Panc1 (cell line): ENCODE measurements at regions of chr18 and their contacts with region 1.

Region 1: GRCh38 chr18:3217948-3218647 is 1.7 kb downstream of the MYOM1 start:
- DNase-seq: no peak
- ATAC-seq: no peak
- H3K4me3 ChIP-seq: no peak overlapping the region
- H3K27ac ChIP-seq: no peak overlapping the region
- H3K4me1 ChIP-seq: peaks cover 10% of the 10 kb centered on the region
- H3K27me3 ChIP-seq: no peaks in the 10 kb centered on the region
- CTCF ChIP-seq: no peak

Region 2: DNA sequence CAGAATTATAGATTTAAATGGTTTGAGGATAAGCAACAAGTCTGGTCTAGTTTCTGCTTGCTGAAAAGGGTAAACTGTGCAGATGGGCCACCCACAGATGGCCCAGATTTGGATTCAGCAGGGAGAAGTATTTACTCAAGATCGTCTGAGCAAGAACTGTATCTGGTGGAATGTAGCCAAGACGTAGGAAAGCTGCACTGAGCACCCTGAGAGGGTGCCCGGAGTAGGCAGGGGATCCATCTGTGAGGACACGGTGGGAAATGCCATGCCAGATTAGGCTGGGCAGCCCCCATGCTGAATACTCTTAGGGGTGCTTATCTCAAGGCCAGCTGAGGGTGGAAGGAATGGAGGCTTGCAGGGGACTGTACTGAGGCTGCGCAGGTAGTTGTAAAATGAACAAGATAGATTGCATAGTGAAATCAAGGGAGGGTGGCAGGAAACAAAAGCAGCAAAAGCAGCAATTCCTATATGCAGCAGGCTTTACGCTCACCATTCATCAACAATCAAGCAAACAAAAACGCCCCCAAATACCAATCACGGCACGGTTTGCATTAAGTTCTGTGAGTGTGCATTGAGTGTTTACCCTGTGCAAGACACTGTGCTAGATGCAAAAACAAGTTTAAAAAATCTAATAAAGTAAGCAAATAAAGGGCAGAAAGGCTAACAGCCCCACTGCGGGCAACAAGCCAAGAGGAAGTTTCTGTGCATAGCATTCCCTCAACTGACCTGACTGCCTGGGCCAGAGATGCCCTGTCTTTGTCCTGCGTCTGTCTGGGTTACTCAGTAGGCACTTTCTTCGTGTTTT is 173.0 kb before region 1 on chr18:
- CTCF ChIA-PET with region 1: no interaction called
- POLR2A ChIA-PET with region 1: no interaction called
- in situ Hi-C with region 1: no loop called
- intact Hi-C with region 1: loop called (anchors 10 kb)
- DNase-seq: no peak
- ATAC-seq: peak; percentile 48; the same call in 1 of the 2 replicates
- H3K4me3 ChIP-seq: no peak overlapping the region
- H3K27ac ChIP-seq: peak overlapping the region; percentile 4; the same call in 1 of the 2 replicates
- H3K4me1 ChIP-seq: no peaks in the 10 kb centered on the region; the same call in 1 of the 2 replicates
- H3K27me3 ChIP-seq: no peaks in the 10 kb centered on the region
- CTCF ChIP-seq: no peak

Region 3: DNA sequence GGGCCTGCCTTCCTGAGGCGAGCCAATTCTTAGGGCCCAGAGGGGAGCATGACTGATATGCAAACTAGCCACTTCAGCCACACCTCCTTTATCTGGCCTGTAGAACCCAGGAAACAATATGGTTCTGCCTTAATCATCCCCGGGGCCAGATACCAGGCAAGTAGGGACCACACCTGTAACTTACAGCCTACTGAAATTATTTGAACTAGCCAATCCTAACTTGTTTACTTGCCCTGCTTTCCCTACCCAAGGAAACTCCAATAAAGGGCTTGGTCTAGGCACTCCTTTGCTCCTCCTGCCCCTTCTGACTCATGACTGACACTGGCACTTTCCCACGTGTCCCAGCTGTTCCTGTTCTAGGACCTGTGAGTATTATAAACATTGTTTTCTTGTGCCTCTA is 55.9 kb before region 1 on chr18:
- CTCF ChIA-PET with region 1: no interaction called
- POLR2A ChIA-PET with region 1: interaction called, 12 read pairs
- in situ Hi-C with region 1: no loop called
- intact Hi-C with region 1: no loop called
- DNase-seq: no peak
- ATAC-seq: no peak
- H3K4me3 ChIP-seq: no peak overlapping the region
- H3K27ac ChIP-seq: no peak overlapping the region
- H3K4me1 ChIP-seq: no peaks in the 10 kb centered on the region
- H3K27me3 ChIP-seq: no peaks in the 10 kb centered on the region
- CTCF ChIP-seq: no peak

Region 4: GRCh38 chr18:3261371-3262246 is 43.5 kb after region 1 on chr18 and contains the start of gene MYL12B:
- CTCF ChIA-PET with region 1: no interaction called
- POLR2A ChIA-PET with region 1: no interaction called
- in situ Hi-C with region 1: no loop called
- intact Hi-C with region 1: no loop called
- DNase-seq: no peak
- ATAC-seq: peak; percentile 88
- H3K4me3 ChIP-seq: peak within 1 kb of the TSS; percentile 90 to 97
- H3K27ac ChIP-seq: peak within 1 kb of the TSS; percentile 100
- H3K4me1 ChIP-seq: peaks cover 45% of the 10 kb centered on the region
- H3K27me3 ChIP-seq: no peaks in the 10 kb centered on the region
- CTCF ChIP-seq: no peak
- total RNA-seq, gene MYL12B: 420 TPM